Adrenal gland (tissue), 19 donors: ENCODE measurements at regions of chr5 and their contacts with region 1.

Region 1: GRCh38 chr5:43556857-43557542 is at the start of gene PAIP1:
- DNase-seq: peak in 6 of 7 donors; percentile 73 to 86 (median 82)
- H3K4me3 ChIP-seq: peak within 1 kb of the TSS; percentile 16 to 86 (median 44)
- H3K27ac ChIP-seq: peak within 1 kb of the TSS; percentile 32 to 99 (median 93)
- H3K4me1 ChIP-seq: peaks cover 15 to 36% of the 10 kb centered on the region in 2 donors
- H3K27me3 ChIP-seq: no peaks in the 10 kb centered on the region
- CTCF ChIP-seq: peak in 4 of 6 experiments; percentile 28 to 72 (median 63)
- POLR2A ChIP-seq: peak; percentile 52 to 67
- total RNA-seq, gene PAIP1: 74.3 to 262 (median 85.3) TPM

Region 2: DNA sequence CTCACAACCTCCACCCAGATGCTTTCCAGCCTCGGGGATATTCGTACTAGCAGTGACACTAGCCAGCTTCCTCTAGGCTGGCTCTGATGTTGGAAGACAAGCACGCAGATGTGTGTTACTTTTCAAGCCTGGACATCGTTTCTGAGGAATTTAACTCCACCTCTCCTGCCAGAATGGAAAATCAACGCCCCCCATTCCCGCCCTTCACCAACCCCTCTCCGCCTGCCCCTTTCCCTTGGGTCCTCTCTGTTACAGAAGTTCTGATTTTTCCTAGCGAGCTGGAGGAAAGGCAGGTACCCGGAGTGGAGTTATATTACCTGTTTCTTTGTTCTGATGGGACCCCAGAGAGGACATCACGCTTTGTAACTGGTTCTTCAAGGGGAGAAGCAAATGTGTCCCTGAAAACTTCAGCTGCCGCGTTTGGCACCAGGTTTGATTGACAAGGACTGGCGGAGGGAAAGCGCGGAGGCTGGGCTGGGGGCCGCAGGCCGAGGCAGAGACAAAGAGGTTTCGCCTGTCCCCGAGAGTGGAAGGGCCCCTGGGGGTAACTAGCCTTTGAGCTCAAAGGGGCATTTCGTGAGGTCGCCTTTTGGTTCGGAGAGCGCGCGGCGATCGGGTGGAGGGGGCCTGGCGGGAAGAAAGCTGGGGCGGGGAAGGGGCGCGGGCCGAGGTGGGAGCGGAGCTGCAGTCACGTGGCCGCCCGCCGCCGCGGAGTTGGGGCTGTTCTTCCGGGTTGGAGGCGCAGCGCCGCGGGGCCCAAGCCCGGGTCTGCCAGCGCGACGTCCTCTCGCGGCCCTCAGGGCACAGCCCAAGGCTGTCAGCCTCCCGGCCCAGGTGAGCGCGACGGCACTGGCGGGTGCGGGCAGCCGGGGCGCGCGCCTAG is 45.7 kb after region 1 on chr5 and contains the start of gene NNT:
- intact Hi-C with region 1: loop called in 1 of 2 experiments (anchors 2 kb)
- DNase-seq: peak; percentile 53 to 75 (median 70)
- H3K4me3 ChIP-seq: peak within 1 kb of the TSS; percentile 56 to 91 (median 77)
- H3K27ac ChIP-seq: peak within 1 kb of the TSS; percentile 61 to 88 (median 76)
- H3K4me1 ChIP-seq: peaks cover 11 to 17% of the 10 kb centered on the region in 2 donors
- H3K27me3 ChIP-seq: no peaks in the 10 kb centered on the region
- CTCF ChIP-seq: no peak
- POLR2A ChIP-seq: peak in 1 of 2 donors; percentile 49
- total RNA-seq, gene NNT: 43.1 to 104 (median 69.0) TPM

Region 3: GRCh38 chr5:44028226-44028625 is 471.2 kb after region 1 on chr5:
- intact Hi-C with region 1: no loop called
- DNase-seq: no peak
- H3K4me3 ChIP-seq: no peak overlapping the region
- H3K27ac ChIP-seq: no peak overlapping the region
- H3K4me1 ChIP-seq: no peaks in the 10 kb centered on the region
- H3K27me3 ChIP-seq: no peaks in the 10 kb centered on the region
- CTCF ChIP-seq: no peak
- POLR2A ChIP-seq: no peak